ENCODE measurements at regions of chr4 and their contacts with region 1.

Region 1: GRCh38 chr4:55008166-55009070 is 117.0 kb downstream of the KDR start:
- DNase-seq: no peak

Region 2: DNA sequence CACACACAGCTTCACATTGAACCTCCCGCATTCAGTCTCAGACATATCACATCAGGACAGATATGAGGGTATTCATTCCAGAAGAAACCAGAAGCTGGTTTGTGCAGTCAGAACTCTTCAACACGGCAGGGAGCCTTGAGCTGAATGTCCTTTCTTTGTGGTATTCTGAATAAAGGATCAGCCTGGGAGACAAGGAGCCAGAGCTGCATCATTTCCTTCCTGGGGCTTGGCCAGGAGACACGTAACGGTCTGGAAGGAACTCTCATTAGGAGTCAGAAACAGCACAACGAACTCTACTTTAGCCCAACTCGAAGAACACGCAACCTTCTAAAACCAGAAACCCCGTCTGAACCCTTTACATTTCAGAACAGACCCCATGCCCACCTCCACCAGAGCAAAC is 70.6 kb after region 1 on chr4:
- intact Hi-C with region 1: loop called (anchors 5 kb)
- DNase-seq: peak; percentile 82

Region 3: GRCh38 chr4:55124322-55125076 is 116.1 kb after region 1 on chr4:
- intact Hi-C with region 1: loop called (anchors 5 kb)
- DNase-seq: no peak

Region 4: GRCh38 chr4:55175779-55176231 is 167.4 kb after region 1 on chr4:
- intact Hi-C with region 1: loop called (anchors 5 kb)
- DNase-seq: no peak

Region 5: GRCh38 chr4:55303818-55304217 is 295.4 kb after region 1 on chr4:
- intact Hi-C with region 1: loop called (anchors 5 kb)
- DNase-seq: no peak